ENCODE measurements at regions of chr2 and their contacts with region 1.

Region 1: GRCh38 chr2:140863713-140864112 is 1267.1 kb downstream of the LRP1B start:
- DNase-seq: no peak
- ATAC-seq: peak; percentile 53
- H3K4me3 Mint-ChIP-seq: no peak overlapping the region
- H3K27ac Mint-ChIP-seq: no peak overlapping the region
- H3K4me1 Mint-ChIP-seq: peaks cover 8% of the 10 kb centered on the region
- H3K27me3 Mint-ChIP-seq: no peaks in the 10 kb centered on the region
- CTCF ChIP-seq: no peak; the same call in 1 of the 2 replicates

Region 2: DNA sequence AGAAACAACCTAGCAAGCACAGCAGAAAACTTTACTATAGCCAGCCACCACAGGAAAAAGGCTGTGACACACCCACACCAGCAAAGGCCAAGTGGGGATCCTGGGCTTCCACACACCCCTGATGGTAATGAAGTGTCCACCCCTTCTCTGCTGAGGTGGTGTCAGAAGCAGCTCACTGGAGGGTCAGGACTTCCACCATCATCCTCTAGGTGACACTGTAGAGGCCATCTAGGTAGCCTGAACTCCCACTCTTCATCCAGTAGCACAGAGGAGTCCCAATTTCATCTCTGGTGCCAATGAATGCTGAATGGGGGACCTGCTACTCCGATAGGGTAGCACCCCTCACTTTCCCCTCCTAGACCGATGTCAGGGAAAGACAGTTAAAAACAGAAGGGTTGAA is 277.3 kb before region 1 on chr2:
- CTCF ChIA-PET with region 1: interaction called, 10 read pairs
- POLR2A ChIA-PET with region 1: no interaction called
- DNase-seq: peak; percentile 64
- ATAC-seq: peak; percentile 100
- H3K4me3 Mint-ChIP-seq: no peak overlapping the region
- H3K27ac Mint-ChIP-seq: no peak overlapping the region
- H3K4me1 Mint-ChIP-seq: no peaks in the 10 kb centered on the region; the same call in 1 of the 2 replicates
- H3K27me3 Mint-ChIP-seq: no peaks in the 10 kb centered on the region
- CTCF ChIP-seq: peak; percentile 54

Measured in WTC11 (cell line).